Stomach (tissue), 19 donors: ENCODE measurements at regions of chr1 and their contacts with region 1.

Region 1: GRCh38 chr1:8423650-8424538 is 106.0 kb downstream of the SLC45A1 start:
- DNase-seq: peak; percentile 63 to 89
- H3K4me3 ChIP-seq: peak overlapping the region; percentile 73 to 93 (median 86)
- H3K27ac ChIP-seq: peak overlapping the region; percentile 98 to 99 (median 99)
- H3K4me1 ChIP-seq: peaks cover 36 to 77% (median 54%) of the 10 kb centered on the region in 4 donors
- H3K27me3 ChIP-seq: no peaks in the 10 kb centered on the region
- CTCF ChIP-seq: peak in 2 of 7 experiments; percentile 12 to 17
- EP300 ChIP-seq: no peak
- POLR2A ChIP-seq: no peak

Region 2: DNA sequence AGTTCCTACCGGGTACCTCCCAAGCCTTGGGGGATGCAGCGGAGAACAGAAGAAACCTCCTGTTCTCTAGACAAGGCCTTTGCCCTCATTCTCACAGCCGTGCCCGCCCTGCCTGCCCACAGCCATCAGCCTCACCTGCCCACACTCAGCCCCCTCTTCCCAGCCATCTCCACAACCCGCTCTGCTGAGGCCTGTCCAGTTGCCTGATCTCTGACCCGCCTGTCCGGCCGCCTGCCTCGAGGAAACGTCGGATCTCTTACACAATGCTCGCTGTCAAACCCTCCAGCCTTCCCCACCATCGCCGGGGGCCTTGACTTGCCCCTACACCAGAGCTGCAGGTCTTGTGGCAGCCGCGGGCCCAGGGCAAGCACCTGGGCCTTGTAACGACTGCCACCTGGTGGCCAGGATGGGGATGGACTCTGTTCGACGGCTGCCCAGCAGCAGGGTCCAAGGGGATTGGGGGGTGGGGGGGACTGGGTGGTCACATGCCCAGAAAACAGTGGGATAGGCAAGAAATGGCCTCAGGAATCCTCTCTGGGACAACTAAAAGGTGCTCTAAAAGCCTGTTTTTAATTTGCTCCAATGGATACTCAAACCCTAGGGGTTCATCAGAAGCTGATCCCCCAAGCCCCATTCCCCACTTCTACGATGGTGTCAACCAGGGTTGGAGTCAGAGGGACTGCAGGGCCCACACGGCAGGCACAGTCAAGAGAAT is 75.0 kb before region 1 on chr1:
- intact Hi-C with region 1: no loop called
- DNase-seq: peak; percentile 69 to 89
- H3K4me3 ChIP-seq: no peak overlapping the region
- H3K27ac ChIP-seq: peak overlapping the region in 1 of 5 donors; percentile 78
- H3K4me1 ChIP-seq: peaks cover 12 to 69% (median 28%) of the 10 kb centered on the region in 4 donors
- H3K27me3 ChIP-seq: no peaks in the 10 kb centered on the region
- CTCF ChIP-seq: peak in 5 of 7 experiments; percentile 72 to 96 (median 81)
- EP300 ChIP-seq: no peak
- POLR2A ChIP-seq: no peak

Region 3: DNA sequence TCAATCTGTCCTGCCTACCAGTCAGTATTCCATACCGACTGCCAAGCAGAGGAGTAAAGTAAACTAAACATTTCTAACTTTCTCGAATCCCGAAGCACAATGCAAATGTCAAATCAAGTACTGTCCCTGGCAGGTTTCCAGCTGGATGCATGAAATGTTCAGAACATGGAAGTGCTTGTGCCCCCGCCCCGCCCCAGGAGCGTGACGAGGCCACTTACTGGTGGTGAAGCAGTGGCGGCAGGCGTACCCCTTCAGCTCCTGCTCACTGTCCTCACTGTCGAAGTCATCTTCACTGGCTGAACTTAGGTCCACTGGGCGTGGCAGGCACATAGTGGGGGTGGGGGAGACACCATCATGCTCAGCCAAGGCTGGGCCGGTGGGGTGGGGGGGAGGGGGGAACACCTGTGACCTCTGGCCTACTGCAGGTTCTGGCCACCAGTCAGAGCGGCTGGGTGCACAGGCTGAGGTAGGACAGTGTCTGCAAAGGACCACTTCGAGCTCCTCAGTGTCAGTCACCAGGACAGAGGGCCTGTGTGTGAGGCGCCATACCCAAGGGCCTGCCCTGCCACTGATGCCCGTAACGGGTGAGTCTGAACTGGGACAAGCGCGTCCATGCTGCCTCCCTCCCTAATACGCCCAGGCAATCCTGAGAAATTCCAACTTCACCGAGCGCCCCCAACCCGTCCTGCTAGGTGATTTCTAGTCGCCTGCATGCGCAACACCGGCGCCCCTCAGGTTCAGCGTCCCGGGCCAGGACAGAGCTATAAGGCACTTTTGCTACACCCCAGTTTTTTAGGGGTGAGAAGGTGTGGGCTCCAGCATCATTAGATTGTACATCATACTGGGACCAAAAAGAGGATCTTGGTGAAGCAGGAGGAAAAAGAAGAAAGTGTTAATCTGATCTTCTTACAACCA is 59.1 kb before region 1 on chr1:
- intact Hi-C with region 1: loop called (anchors 10 kb)
- DNase-seq: peak in 1 of 2 donors; percentile 75
- H3K4me3 ChIP-seq: no peak overlapping the region
- H3K27ac ChIP-seq: peak overlapping the region in 4 of 5 donors; percentile 18 to 56 (median 36)
- H3K4me1 ChIP-seq: peaks cover 42 to 71% (median 55%) of the 10 kb centered on the region in 4 donors
- H3K27me3 ChIP-seq: no peaks in the 10 kb centered on the region
- CTCF ChIP-seq: no peak
- EP300 ChIP-seq: no peak
- POLR2A ChIP-seq: no peak